Activated CD4-positive, alpha-beta memory T cell treated with anti-CD3 and anti-CD28 coated beads, Interleukin-2, amount 10 ng/mL, durations not matched to agents 7 days and 5 days (primary cell): ENCODE measurements at regions of chr7 and their contacts with region 1.

Region 1: DNA sequence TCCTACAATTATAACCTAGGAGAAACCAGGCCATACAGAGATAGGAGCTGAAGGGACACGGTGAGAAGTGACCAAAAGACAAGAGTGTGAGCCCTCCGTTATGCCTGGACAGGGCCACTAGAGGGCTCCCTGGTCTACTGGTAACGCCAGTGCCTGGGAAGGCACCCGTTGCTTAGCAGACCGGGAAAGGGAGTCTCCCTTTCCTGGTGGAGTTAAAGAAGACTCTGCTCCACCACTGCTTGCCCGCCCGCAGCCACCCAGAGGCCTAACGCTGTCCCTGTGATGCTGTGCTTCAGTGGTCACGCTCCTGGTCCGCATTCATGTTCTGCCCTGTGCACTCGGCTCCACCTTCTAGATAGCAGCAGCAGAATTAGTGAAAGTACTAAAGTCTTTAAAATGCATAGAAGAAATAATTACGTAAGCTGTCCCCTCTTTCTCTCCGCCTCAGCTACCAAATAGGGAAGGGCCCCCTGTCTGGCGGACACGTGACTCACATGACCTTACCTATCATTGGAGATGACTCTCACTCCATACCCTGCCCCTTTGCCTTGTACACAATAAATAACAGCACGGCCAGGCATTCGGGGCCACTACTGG is 34.8 kb downstream of the GRID2IP start:
- DNase-seq: peak; percentile 71
- H3K4me3 Mint-ChIP-seq: peak overlapping the region; percentile 61
- H3K27ac Mint-ChIP-seq: no peak overlapping the region
- H3K4me1 Mint-ChIP-seq: peaks cover 7% of the 10 kb centered on the region
- H3K27me3 Mint-ChIP-seq: peaks cover 3% of the 10 kb centered on the region

Region 2: GRCh38 chr7:6453734-6454133 is 62.8 kb before region 1 on chr7:
- CTCF ChIA-PET with region 1: no interaction called
- POLR2A ChIA-PET with region 1: no interaction called
- DNase-seq: no peak
- H3K4me3 Mint-ChIP-seq: no peak overlapping the region
- H3K27ac Mint-ChIP-seq: no peak overlapping the region
- H3K4me1 Mint-ChIP-seq: peaks cover 6% of the 10 kb centered on the region
- H3K27me3 Mint-ChIP-seq: no peaks in the 10 kb centered on the region

Region 3: DNA sequence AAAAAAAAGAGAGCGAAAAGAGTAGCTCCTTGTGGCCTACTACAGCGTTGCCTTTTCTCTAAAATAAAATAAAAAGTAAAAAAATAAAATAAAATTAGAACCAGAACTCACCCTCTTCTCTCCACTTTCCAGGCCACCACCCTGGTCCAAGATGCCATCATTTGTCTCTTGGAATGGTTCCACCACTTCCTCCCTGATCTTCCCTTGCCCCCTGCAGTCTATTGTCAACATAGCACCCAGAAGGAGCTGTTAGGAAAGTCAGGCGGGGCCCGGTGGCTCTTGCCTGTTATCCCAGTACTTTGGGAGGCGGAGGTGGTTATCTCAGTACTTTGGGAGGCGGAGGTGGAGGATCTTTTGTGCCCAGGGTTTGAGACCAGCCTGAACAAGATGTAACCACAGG is 42.4 kb after region 1 on chr7:
- CTCF ChIA-PET with region 1: interaction called, 12 read pairs
- POLR2A ChIA-PET with region 1: no interaction called
- DNase-seq: peak; percentile 23
- H3K4me3 Mint-ChIP-seq: no peak overlapping the region
- H3K27ac Mint-ChIP-seq: no peak overlapping the region
- H3K4me1 Mint-ChIP-seq: peaks cover 6% of the 10 kb centered on the region
- H3K27me3 Mint-ChIP-seq: no peaks in the 10 kb centered on the region

Region 4: DNA sequence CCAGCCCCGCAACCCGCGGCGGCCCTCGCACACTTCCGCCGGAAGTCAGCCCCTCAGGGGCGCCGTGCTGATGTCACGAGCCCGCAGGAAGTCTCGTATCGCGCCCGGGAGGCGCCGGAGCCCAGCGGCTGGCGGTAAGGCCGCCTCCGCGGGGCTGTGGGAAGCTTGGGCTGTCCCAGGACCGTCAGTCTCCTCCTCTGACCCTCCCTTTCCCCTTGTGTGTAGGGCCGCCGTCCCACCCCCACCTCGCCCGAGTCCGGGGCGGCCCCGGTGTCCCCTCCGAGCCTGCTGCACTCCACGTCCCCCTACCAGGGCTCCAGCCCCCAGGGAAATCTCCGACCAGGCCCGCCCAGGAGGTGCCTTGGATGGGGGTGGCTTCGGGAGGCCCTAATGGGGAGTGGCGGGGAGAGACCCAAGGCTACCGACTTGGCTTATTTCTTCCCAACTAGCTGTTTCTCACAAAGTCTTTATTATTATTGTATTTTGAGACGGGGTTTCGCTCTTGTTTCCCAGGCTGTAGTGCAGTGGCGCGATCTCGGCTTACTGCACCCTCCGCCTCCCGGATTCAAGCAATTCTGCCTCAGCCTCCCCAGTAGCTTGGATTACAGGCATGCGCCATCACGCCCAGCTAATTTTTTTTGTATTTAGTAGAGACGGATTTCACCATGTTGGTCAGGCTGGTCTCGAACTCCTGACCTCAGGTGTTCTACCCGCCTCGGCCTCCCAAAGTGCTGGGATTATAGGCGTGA is 61.1 kb after region 1 on chr7 and contains the start of gene ZDHHC4:
- CTCF ChIA-PET with region 1: interaction called, 10 read pairs
- POLR2A ChIA-PET with region 1: interaction called, 3 read pairs
- DNase-seq: peak; percentile 88
- H3K4me3 Mint-ChIP-seq: peak within 1 kb of the TSS; percentile 84
- H3K27ac Mint-ChIP-seq: peak within 1 kb of the TSS; percentile 86
- H3K4me1 Mint-ChIP-seq: peaks cover 37% of the 10 kb centered on the region
- H3K27me3 Mint-ChIP-seq: no peaks in the 10 kb centered on the region
- total RNA-seq, gene ZDHHC4: 34.2 to 35.5 TPM